ENCODE measurements at regions of chr22 and their contacts with region 1.

Region 1: DNA sequence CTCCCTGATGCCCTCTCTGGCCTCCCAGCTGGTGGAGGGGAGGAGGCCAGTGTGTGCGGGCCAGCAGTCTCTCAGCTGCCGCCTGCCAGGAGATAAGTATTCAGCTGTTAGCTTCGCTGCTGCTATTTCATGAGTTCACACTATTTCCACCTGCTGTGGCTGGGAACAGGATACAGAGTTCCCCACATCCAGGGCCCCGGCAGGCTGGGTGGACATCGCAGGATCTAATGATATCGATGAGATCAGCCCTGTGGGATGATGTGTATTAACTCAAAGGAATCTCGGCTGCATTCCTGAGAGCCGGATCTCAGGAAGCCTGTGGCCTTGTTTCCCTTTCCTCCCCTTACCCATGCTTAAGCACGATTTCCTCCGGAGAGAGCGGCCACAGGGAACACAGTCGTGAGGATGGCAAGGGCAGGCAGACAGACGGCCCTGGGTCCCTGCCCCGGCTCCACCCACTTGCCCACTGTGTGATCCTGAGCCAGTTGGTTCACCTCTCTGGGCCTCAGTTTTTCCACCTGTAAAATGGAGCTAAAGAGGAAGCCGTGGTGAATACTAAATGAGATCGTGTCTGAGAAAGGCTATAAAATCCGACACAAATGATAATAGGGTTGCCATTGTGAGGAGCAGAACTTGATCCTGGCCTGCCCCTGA is 6.5 kb upstream of the PVALB start:
- DNase-seq: no peak

Region 2: DNA sequence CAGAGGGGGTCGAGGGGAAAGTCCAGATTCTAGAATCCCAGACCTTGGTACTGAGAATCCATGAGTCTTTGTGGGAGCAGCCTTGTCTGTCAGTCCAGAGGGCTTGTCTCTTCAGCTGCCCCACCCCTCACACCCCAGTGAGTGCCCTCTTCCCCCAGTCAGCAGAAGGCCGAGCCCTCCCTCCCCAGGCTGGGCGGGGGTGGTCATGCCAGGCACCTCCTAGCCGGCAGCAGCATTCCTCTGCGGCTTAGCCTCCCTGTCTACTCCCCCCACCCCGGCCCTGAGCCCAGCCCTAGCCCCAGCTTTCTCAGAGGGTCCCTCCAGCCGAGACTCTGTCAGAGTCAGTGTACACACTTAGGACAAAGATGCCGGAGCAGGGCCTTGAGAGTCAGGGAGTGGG is 1156.5 kb after region 1 on chr22:
- intact Hi-C with region 1: loop called in 1 of 2 experiments (anchors 5 kb)
- DNase-seq: no peak

Measured in posterior vena cava (tissue), 2 donors.